ENCODE measurements at regions of chr5 and their contacts with region 1.

Region 1: DNA sequence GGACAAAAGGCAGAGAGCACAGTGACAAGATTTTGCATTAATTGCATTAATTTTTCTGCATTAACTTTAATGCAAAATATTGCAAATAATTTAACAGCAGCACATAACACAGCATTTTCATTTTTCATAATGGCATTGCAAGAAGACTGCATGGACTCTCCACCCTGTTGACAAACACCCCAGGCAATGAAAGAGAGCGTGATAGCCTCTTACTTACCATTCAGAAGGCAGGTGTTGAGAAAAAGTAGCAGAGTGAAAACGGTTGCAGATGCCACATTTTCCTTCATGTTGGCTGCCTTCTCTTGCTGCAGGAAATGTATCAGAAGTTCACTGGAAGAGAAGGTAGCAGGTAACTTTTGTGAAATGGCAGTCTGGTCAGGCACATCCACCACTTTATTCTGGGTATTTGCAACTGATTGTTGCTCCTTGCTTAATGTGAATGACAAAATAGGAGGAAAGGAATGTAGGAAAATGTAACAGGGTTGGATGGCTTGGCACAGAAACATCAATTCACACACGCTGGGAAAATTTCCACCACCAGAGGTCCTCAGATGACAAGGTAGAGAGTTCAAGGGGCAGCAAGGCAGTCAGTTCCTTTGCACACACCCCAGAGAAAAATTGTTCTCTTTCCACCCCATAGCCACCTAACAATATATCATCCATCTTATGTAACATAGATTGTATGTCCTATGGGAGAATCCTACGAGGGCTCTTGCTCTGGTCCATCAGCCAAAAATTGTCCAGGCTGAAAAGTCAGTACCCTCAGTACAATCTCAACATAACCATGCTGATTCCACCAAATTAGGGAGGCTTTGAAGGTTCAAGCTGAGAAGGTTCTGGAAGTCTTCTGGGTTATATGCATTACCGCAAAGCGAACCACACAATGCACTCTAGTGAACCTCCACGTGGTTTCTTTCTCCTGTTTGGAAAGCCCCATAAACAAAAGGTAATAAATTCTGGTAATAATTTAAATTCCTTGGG is 41.9 kb upstream of the AGXT2 start:
- DNase-seq: peak; percentile 51
- CTCF ChIP-seq: peak; percentile 68

Region 2: GRCh38 chr5:35182541-35183535 is 93.2 kb after region 1 on chr5:
- in situ Hi-C with region 1: loop called (anchors 25 kb)
- DNase-seq: peak; percentile 41
- CTCF ChIP-seq: peak; percentile 31

Region 3: DNA sequence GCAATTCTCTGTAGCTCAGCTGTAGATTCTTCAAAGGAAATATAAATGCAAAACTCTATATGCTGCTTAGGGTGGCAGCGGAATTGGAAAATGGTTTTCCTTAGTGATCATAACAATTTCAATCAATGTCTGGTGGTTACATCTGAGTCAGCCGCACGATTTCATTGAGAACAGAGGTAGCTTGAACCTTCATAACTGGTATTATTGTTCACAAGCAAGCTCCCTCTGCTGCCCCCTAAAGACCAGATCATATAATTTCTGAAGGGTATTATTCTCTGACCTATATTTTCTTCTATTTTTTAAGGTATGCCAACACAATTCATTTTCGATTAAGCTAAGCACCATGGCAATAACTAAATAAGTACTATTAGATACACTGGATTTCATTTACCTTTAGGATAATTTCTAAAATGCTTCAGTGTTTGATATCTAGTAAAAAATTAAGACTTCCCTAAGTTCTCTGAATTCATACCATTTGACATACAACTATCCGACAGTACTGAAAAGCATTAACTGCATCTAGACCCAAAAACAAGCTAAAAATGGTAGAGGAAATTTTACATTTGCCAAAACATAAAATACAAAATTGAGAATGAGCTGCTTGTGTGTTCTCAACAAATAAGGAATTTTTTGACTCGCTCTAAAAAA is 346.9 kb after region 1 on chr5:
- in situ Hi-C with region 1: loop called (anchors 10 kb)
- DNase-seq: peak; percentile 11
- CTCF ChIP-seq: peak; percentile 38

Region 4: DNA sequence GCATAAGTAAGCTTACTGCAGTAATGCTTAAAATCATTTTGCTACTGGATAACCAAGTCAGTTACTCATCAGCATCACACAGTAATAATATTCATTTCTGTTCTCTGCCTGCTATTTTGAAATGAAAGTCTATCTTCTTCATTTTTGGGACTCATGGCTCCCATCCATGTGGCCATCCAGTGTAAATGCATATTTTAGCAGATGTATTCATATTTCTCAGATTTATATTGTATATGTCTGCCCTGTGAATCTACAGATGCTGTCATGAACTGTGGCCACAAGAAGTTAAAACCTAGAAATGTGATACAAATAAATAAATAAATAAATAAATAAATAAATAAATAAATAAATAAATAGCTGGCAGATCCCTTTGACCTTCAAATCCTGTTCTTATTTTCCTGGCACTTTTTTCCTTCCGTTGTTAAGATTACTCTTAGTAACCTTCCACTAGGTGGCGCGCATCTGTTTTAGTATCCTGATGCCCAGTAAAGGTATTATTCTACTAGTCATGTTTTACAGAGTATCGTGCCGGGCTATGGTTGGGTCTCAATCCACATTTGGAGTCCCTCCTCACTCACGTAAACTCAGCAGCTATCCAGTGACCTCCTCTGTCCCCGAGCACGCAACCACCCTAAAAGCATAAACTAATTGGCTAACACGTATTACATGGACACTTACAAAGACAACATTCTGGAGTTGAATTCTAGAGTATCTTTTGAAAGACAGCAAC is 687.9 kb after region 1 on chr5:
- in situ Hi-C with region 1: loop called (anchors 25 kb)
- DNase-seq: peak; percentile 38
- CTCF ChIP-seq: peak; percentile 42

Region 5: DNA sequence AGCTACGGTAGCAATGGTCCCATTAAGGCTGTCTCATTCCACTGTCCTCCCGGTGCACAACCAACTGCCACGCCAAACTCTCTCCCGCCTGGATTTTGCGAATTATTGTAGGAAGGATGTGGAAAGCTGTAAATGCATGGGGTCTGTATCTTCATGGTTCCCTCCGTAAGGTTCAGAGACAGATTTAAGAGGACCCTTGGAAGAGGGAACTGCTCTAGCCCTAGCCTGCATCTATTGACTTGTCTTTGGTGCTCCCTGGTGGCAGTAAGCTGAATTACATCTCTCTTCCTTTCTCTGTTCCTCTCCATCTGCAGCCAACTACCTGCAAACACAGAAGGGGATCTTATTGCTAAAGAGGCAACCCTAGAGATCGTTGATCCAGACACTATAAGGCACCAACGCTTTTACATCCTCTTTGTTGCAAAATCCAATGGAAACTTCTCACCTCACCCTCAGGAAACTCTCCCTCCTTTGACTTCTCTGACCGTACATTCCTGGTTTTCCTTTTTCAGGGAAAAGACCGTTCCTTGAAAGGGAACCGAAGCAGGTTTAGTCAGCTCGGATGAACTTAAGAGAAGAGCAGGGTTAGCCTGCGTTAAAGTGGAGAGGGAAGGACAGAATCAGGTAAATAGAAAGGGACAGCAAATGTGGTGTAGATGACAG is 836.9 kb after region 1 on chr5:
- in situ Hi-C with region 1: loop called (anchors 10 kb)
- DNase-seq: peak; percentile 67
- CTCF ChIP-seq: peak; percentile 83

Region 6: DNA sequence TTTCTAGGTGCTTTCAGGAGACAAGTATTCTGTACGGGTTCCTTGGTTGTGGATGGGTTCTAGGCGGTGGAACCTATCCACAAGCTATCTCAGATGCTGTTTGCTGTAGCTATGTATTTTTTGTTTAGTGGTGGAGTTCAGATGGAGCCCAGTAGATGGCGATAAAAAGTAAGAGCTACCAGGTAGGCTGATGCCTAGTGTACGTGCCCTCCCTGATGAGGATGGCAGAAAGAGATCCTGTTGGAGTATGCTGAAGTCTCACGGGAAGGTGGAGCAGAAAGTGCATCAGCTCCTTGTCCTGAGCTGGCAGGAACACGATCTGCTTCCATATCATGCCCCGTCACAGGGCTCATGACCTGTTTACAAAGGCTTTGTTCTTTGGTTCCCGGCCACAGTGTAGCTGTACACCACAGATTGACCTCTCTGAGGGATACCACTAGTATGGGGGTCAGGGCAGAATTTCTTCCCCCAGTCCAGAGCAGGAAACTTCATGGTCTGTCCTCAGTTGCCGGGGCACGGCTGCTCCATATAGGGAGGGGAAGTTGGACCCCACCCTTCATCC is 989.7 kb after region 1 on chr5:
- in situ Hi-C with region 1: no loop called
- DNase-seq: peak; percentile 72
- CTCF ChIP-seq: peak; percentile 66

Measured in GM13976 (cell line).